ENCODE measurements at regions of chr12 and their contacts with region 1.

Region 1: DNA sequence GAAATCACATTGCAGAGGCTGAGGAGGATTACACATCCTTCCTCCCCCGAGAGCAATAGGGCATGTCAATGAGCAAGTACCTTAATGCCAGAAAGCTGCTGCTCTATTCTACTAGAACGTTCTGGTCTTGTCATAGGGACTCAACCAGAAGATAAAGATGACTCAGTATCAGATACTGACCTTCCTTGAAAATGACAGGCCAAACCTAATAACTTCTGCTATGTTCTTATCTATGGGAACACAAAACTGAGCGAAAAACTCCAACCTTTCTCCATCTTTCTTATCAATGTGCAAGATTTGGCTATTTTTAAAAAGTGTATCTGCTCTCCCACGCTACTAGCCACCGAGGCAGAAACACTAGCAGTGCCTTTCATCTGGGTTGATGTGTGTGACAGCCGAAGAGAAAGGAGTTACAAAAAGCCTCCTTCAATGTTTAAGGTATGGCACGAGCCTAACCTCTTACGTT is 5.5 kb downstream of the CCDC92 start:
- DNase-seq: no peak
- H3K4me3 ChIP-seq: no peak overlapping the region
- H3K27ac ChIP-seq: no peak overlapping the region
- H3K4me1 ChIP-seq: peaks cover 0 to 30% (median 9%) of the 10 kb centered on the region in 4 donors
- H3K27me3 ChIP-seq: no peaks in the 10 kb centered on the region
- CTCF ChIP-seq: no peak
- EP300 ChIP-seq: no peak
- POLR2A ChIP-seq: no peak

Region 2: GRCh38 chr12:123950476-123951349 is 16.4 kb before region 1 on chr12:
- in situ Hi-C with region 1: no loop called
- intact Hi-C with region 1: loop called (anchors 1 kb)
- DNase-seq: no peak
- H3K4me3 ChIP-seq: no peak overlapping the region
- H3K27ac ChIP-seq: no peak overlapping the region
- H3K4me1 ChIP-seq: peaks cover 0 to 5% (median 0%) of the 10 kb centered on the region in 4 donors
- H3K27me3 ChIP-seq: no peaks in the 10 kb centered on the region
- CTCF ChIP-seq: no peak
- EP300 ChIP-seq: no peak
- POLR2A ChIP-seq: no peak